ENCODE measurements at regions of chr12 and their contacts with region 1.

Region 1: GRCh38 chr12:89389755-89390661 is 37.7 kb upstream of the DUSP6 start:
- DNase-seq: peak; percentile 62
- ATAC-seq: peak; percentile 77
- H3K4me3 ChIP-seq: peak overlapping the region; percentile 13 to 52 (median 27); a peak in 3 of 6 replicates
- H3K27ac ChIP-seq: peak overlapping the region; percentile 75
- H3K4me1 ChIP-seq: peaks cover 82% of the 10 kb centered on the region
- H3K27me3 ChIP-seq: no peaks in the 10 kb centered on the region
- CTCF ChIP-seq: no peak
- EP300 ChIP-seq: peak in 1 of 2 experiments; percentile 32; a peak in 1 of 4 replicates
- POLR2A ChIP-seq: no peak
- RAD21 ChIP-seq: no peak

Region 2: GRCh38 chr12:89427508-89428156 is 37.6 kb after region 1 on chr12:
- CTCF ChIA-PET with region 1: no interaction called
- POLR2A ChIA-PET with region 1: no interaction called
- in situ Hi-C with region 1: no loop called
- intact Hi-C with region 1: no loop called
- DNase-seq: no peak
- ATAC-seq: no peak
- H3K4me3 ChIP-seq: no peak overlapping the region
- H3K27ac ChIP-seq: no peak overlapping the region
- H3K4me1 ChIP-seq: peaks cover 7% of the 10 kb centered on the region; the same call in 1 of the 2 replicates
- H3K27me3 ChIP-seq: no peaks in the 10 kb centered on the region
- CTCF ChIP-seq: no peak
- EP300 ChIP-seq: no peak
- POLR2A ChIP-seq: no peak
- RAD21 ChIP-seq: no peak

Region 3: DNA sequence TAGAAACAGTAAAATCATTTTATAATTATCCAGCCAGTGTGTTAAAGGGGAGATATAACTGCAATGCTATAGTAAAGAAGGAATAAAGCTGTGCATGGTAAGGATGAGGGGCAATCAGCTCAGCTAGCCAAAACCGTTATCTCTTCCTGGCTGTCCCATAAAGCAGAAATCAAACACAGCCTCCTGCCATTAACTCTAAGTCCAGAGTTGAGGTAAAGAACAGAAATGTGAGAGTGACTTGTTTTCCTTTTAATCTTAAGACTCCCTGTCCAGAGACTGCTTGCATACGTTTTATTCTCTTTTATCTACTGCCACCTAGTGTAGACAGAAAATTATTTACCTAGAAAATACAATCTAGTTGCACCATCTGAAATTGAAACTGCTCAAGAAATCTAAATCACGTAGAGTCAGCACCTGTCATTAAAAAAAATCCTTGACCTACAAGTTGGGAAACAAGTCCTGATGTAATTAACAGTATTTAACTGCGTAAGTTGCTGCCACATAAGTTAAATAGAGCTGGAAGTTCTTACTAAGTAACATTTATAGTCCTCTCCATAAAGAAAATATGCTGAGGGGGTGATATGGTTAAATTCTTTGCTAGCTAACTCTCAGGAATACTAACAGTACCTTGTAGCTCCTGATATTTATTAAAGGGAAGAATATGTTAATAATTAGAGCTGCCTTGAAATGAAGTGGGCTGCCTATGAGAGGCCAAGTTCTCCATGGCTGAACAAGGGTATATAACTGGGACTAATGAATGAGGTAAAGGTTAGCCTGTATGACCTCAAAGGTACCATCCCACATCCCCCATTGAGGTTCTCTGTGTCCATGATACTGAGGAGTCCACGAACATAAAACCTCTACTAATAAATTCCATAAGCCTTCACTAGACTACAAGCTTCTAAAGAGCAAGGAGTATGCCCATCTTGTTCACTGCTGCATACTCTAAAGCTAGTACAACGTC is 71.9 kb after region 1 on chr12:
- CTCF ChIA-PET with region 1: no interaction called
- POLR2A ChIA-PET with region 1: no interaction called
- in situ Hi-C with region 1: no loop called
- intact Hi-C with region 1: loop called (anchors 5 kb)
- DNase-seq: peak; percentile 44
- ATAC-seq: peak; percentile 80
- H3K4me3 ChIP-seq: no peak overlapping the region
- H3K27ac ChIP-seq: no peak overlapping the region
- H3K4me1 ChIP-seq: no peaks in the 10 kb centered on the region
- H3K27me3 ChIP-seq: no peaks in the 10 kb centered on the region
- CTCF ChIP-seq: peak; percentile 72
- EP300 ChIP-seq: no peak
- POLR2A ChIP-seq: no peak
- RAD21 ChIP-seq: peak; percentile 73

Measured in HepG2 (cell line).